Mucosa of descending colon (tissue), 3 donors: ENCODE measurements at regions of chr10 and their contacts with region 1.

Region 1: GRCh38 chr10:71383972-71384687 is 12.6 kb upstream of the CDH23 start:
- DNase-seq: peak; percentile 75 to 88 (median 84)
- ATAC-seq: peak; percentile 94
- H3K4me3 ChIP-seq: no peak overlapping the region
- H3K4me1 ChIP-seq: no peaks in the 10 kb centered on the region
- CTCF ChIP-seq: peak; percentile 91

Region 2: DNA sequence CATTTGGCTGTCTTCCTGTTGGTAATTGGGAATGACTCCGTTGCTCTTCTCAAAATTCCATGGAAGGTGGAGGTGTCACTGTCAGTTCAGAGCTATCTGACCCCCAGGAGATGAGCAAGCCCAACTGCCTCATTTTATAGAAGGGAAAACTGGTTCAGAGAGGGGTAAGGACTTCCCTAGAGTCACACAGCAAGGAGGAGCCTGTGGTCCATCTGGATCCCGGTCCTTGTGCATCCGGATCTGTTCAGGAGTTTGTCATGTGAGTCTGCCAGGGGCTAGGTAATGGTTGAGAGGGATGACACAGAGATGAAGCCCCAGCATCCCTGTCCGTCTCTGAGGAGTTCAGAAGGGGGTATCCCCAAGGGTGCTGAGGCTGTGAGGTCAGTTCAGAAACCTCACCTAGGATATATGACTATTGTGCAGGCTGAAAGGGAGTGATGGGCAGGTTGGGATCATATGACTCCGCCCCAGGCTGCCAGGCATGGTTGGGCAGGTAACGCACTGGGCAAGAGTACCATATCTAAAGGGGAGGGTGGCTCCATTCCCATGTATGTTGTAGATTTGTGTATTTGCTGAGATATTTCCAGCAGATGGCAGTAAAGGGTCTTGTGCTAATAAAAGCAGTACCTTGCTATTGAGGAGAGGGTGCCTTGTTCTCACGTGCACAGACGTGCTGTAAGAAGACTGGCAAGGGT is 81.1 kb before region 1 on chr10:
- intact Hi-C with region 1: no loop called
- DNase-seq: no peak
- ATAC-seq: peak; percentile 48
- H3K4me3 ChIP-seq: no peak overlapping the region
- H3K4me1 ChIP-seq: no peaks in the 10 kb centered on the region
- CTCF ChIP-seq: no peak

Region 3: DNA sequence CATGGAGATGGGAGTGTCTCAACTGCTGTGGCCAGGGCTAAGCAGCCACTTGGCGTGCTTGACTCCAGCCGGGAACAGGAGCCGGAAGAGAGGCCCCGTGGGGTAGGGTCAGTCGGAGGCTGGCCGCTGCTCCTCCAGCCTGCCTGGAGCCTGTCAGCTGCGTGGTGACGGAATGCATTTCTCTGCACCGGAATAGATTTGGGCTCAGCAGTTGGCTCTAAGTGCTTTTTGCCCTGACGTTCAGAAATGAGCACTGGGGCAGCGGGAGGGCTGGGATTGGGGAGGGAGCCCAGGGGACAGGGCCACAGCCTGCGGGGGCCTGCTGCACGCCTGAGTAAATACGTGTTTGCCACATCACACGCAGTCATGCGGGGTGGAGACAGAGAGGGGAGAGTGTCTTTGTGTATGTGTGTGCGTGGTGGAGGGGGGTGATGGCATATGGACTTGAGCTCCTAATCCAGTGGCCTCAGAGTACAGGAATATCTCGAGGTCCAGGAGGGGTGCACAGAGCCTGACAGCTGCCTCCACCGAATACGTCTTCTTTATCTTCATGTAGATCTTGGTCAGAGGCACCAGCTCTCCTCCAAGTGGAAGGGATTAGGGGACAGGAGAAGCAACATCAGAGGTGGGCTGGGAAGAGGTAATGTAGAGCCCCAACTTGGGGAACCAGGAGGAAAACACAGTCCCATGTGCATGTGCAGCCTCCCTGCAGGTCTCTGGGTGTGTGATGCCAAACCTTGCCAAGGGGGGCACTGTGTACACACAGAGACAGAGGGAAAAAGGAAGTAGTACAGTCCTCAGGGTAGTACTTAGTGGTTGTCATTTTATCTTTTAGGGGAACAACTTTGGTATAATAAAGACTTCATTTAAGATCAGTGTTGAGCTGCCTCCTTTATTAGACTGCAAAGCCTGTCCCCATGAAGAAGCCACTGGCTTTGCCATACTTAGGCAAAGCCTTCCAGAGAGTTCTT is 164.0 kb after region 1 on chr10:
- intact Hi-C with region 1: no loop called
- DNase-seq: peak in 1 of 3 donors; percentile 9
- ATAC-seq: peak; percentile 38
- H3K4me3 ChIP-seq: no peak overlapping the region
- H3K4me1 ChIP-seq: no peaks in the 10 kb centered on the region
- CTCF ChIP-seq: no peak

Region 4: GRCh38 chr10:71696628-71697326 is 312.6 kb after region 1 on chr10:
- intact Hi-C with region 1: loop called (anchors 10 kb)
- DNase-seq: peak; percentile 74 to 91 (median 85)
- ATAC-seq: peak; percentile 82
- H3K4me3 ChIP-seq: no peak overlapping the region
- H3K4me1 ChIP-seq: no peaks in the 10 kb centered on the region
- CTCF ChIP-seq: peak; percentile 88

Region 5: DNA sequence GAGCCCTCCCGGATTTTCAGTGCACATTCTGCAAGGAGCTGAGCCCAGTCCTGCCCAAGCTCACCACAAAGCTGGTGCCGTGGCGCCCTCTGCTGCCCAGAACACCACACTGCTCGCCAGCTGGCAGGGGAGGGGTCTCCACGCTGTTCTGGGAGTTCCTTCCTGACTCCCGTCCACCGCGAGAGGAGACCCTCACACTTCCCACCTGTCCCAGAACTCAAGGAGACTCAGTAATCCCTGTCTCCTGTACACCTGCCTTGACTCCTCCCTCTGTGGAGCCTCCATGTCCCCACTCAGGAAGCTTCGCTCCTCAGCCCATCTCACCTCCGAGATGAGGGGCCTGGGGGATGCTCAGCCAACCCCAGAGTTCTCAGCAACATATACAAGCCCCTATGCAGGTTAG is 324.2 kb after region 1 on chr10:
- intact Hi-C with region 1: loop called in 1 of 2 experiments (anchors 10 kb)
- DNase-seq: peak in 2 of 3 donors; percentile 73 to 77
- ATAC-seq: peak; percentile 66
- H3K4me3 ChIP-seq: no peak overlapping the region
- H3K4me1 ChIP-seq: peaks cover 6% of the 10 kb centered on the region
- CTCF ChIP-seq: peak; percentile 80

Region 6: DNA sequence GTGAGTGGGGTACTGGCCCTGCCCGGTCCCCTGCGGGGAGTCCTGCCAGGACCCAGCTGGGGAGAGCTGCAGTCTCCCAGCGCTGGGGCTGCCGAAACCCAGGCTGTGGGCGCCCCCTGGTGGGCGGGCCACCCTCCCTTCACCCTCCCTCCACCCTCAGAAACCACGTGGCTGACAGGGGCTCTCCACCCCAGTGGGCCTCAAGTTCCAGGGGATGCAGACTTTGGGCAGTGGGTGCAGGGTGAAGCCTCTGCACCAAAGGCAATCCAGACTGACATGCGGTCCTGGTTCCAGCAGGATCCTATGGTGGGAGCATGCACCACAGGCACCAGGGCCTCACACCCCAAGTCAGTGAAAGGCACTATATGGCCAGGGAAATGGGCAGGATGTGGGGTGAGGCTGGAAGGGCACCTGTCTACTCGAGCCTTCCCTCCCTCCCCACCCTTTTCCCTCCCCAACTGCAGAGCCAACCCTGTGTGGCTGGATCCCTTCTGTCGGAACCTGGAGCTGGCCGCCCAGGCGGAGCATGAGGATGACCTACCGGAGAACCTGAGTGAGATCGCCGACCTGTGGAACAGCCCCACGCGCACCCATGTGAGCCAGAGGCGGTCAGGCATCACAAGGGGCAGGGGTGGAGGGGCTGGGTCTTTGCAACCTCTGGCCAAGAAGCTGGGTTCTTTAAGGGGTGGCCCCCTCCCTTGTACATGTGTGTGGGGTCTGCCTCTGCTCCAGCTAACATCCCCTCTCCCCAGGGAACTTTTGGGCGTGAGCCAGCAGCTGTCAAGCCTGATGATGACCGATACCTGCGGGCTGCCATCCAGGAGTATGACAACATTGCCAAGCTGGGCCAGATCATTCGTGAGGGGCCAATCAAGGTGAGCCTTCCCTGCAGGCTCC is 428.1 kb after region 1 on chr10:
- intact Hi-C with region 1: loop called (anchors 10 kb)
- DNase-seq: peak; percentile 80 to 84 (median 83)
- ATAC-seq: peak; percentile 89
- H3K4me3 ChIP-seq: no peak overlapping the region
- H3K4me1 ChIP-seq: no peaks in the 10 kb centered on the region
- CTCF ChIP-seq: peak; percentile 68